ENCODE measurements at regions of chr13 and their contacts with region 1.

Region 1: DNA sequence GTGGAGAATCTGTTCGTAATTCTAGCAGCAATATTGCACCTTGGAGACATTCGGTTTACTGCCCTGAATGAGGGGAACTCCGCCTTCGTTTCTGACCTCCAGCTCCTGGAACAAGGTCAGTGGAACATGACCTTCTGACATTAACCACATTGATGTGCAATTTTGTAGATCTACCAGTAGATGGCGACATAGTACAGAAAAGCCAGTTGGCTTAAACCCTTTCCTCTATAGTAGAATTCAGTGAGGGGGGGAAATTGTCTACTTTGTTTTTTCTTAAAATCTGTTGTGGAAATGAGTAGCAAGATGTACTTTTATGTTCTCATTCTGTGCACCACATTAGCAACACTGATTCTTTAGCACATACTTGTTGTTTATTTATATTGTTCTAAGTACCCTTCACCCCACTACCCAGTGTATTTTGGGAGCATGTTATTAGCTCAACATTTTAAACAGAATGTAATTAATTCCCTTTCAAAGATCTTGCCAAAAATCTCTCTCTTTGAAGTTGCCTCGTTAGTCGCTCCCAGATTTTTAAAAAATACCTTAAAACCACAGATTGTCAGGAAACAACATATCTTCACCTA is 332.2 kb downstream of the MYO16 start:
- DNase-seq: no peak
- H3K4me3 ChIP-seq: no peak overlapping the region
- H3K27me3 ChIP-seq: no peaks in the 10 kb centered on the region
- CTCF ChIP-seq: peak; percentile 75

Region 2: DNA sequence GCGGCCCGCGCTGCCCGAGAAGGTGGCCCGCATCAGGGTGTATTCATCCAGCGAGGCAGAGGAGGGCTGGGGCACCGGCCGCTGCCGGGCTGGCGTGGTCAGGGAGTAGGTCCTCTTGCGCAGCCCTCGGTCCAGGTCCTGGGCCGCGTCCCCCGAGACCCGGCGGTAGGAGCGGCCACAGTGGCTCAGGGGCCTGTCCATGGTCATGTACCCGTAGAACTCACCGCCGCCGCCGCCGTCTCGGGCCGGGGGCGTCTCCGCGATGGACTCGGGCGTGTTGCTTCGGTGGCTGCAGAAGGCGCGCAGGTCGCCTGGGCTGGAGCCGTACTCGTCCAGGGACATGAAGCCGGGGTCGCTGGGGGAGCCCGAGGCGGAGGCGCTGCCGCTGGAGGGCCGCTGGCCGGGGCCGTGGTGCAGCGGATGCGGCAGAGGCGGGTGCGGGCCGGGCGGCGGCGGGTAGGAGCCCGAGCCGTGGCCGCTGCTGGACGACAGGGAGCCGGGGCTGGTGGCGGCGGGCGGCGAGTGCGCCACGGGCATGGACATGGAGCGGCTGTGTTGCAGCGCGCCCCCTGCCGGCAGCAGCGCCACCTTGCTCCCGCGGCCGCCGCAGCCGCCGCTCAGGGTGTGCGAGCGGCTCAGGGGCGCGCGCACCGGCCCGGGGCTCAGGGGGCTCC is 822.7 kb after region 1 on chr13:
- CTCF ChIA-PET with region 1: interaction called, 15 read pairs
- POLR2A ChIA-PET with region 1: no interaction called
- DNase-seq: no peak
- H3K4me3 ChIP-seq: peak overlapping the region; percentile 55
- H3K27me3 ChIP-seq: no peaks in the 10 kb centered on the region
- CTCF ChIP-seq: 0 out of 2 replicates have a peak, but pooled peaks have one; percentile 1

Measured in BJ (cell line).